Cardiac septum (tissue), 1 donor: ENCODE measurements at regions of chr2 and their contacts with region 1.

Region 1: DNA sequence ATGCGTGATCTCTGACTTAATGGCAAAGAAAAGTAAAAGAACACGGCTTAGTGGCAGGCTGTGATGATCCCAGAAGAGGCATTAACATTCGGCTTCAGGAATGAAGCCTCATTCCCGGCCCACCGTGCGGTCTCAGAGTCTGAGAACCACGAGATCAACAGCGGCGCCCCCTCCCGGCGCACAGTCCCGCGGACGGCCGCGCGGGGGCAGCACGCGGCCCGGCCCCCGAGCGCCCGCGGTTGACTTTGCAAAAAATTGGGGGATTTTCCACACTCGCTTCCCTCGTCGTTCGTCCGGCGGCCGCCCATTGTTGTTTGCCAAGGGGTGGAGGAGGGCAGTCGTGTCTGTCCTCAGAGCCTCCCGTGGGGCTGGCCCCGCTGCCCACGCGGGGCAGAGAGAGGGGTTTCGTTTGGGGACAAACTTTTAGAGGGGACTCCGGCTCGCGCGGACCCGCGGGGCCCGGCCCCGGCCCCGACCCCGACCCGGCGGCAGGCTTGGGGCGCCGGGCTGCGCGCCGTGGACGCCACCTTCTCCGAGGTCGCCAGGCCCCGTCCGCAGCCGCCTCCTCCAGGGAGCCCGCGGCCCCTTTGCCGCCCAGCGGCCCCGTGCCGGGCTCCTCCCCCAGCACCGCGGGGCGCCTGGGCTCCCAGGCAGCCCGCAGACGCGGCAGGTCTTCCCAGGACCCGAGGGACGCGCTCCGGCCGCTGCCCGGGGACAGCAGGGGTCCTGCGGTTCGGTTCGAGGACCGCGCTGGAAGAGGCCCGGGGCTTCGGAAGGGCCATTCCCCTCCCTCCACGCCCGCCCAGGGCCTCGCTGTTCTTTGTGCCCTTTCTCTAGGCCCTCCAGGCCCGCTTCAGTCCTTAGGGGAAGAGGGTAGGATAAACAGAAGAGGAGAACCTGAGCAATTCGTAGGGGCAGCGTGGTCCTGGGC is 3.4 kb upstream of the HS6ST1 start:
- DNase-seq: peak; percentile 92

Region 2: GRCh38 chr2:128178650-128179460 is 143.2 kb before region 1 on chr2:
- intact Hi-C with region 1: loop called (anchors 5 kb)
- DNase-seq: peak; percentile 82

Region 3: GRCh38 chr2:128347701-128348539 is 25.9 kb after region 1 on chr2:
- intact Hi-C with region 1: loop called (anchors 2 kb)
- DNase-seq: peak; percentile 83

Region 4: GRCh38 chr2:128494640-128495321 is 172.7 kb after region 1 on chr2:
- intact Hi-C with region 1: loop called (anchors 10 kb)
- DNase-seq: no peak

Region 5: DNA sequence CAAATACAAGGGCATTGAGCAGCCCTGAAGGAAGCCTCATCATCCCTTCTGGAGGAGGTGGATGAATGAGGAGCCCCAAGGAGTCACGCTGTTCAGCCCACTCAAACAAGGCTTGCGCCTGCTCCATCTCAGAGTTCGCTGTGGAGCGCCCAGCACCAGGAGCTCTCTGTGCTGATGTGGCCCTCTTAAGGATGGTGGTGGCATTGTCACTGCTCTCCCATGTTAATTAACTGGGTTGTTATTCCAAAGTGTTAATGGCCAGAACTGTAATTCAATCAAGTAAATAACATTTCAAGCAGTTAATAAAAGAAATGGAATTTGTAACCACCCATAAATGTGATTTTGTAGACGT is 931.4 kb after region 1 on chr2:
- intact Hi-C with region 1: loop called (anchors 10 kb)
- DNase-seq: no peak

Region 6: DNA sequence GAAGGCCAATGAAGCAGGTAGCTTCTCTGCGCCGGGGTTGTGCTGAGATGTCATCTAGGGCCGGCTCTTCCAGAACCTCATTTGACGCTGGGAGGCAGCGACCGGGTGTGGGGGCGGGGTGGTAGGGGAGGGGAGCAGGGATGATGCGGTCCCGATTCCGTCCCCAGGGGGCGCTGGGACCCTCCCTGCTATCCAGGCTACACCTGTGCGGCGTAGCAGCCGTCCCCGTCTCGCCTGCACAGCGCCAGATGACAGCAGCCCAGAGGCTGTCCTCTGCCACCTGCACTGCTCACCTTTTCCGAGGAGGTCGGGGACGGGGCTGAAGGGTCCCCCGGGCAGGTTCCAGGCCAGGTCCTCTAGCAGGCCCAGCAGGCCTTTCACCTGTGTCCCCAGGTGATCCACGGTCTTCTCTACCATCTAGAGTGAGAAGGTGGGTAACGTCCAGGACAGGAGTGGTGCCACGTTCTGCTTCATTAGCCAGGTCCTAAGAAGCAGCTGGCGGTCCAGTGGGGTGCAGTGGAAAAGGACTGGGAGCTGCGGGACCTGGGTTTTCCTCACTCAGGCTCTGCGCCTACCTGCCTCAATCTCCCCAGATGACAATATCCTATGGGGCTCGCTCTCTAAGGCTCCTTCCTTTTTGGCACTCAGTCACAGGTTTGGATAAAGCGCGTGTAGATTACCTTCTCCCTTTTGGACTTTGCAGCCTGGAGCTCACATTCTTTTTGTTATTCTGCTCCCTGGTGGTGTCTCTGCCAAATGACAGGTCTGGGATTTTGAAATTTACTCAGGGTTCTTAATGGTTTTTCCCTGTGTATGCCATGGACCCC is 1601.4 kb after region 1 on chr2:
- intact Hi-C with region 1: loop called (anchors 10 kb)
- DNase-seq: no peak